RWPE1 (cell line): ENCODE measurements at regions of chr13 and their contacts with region 1.

Region 1: GRCh38 chr13:36981156-36981743 is 17.9 kb downstream of the ALG5 start:
- DNase-seq: peak; percentile 30
- H3K27ac ChIP-seq: no peak overlapping the region
- CTCF ChIP-seq: peak; percentile 67

Region 2: DNA sequence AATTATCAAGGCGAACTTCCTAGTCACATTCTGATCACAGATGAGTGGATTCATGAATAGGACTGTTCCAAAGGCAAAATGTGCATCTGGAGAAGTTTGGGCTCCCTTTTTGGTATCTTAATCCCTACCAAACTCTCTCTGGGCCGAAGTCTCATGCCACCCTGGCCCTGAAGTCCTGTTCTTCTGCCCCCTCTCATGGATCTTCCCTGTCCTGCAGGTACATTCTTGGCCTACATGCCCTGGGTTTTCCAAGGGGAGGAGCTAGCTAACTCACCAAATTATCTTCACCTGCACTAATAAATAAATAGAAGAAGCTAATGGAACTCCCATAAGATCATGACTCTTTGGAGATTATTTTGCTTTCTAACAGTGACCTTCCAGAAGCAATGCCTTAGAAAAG is 257.1 kb before region 1 on chr13:
- CTCF ChIA-PET with region 1: no interaction called
- POLR2A ChIA-PET with region 1: no interaction called
- DNase-seq: no peak
- H3K27ac ChIP-seq: no peak overlapping the region
- CTCF ChIP-seq: no peak

Region 3: DNA sequence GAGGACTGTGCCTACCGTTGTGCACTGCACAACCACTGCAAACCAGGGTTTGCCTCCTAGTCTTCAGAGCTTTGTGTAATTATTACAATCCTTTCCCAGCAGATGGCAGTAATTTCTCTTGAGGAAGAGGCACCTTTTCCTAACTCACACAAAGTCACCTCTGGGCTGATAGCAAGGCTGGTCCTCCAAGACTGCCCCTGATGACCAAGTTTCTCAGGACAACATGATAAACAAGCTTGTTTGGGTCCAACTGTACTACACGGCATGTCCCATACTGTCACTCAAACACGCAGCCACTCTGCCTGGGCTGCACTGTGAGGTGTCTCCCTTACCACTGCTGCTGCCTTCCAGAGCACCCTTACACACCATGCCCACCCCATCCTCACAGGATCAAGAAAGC is 123.0 kb before region 1 on chr13:
- CTCF ChIA-PET with region 1: interaction called, 14 read pairs
- POLR2A ChIA-PET with region 1: no interaction called
- DNase-seq: peak; percentile 21
- H3K27ac ChIP-seq: no peak overlapping the region
- CTCF ChIP-seq: peak; percentile 48